ENCODE measurements at regions of chr4 and their contacts with region 1.

Region 1: DNA sequence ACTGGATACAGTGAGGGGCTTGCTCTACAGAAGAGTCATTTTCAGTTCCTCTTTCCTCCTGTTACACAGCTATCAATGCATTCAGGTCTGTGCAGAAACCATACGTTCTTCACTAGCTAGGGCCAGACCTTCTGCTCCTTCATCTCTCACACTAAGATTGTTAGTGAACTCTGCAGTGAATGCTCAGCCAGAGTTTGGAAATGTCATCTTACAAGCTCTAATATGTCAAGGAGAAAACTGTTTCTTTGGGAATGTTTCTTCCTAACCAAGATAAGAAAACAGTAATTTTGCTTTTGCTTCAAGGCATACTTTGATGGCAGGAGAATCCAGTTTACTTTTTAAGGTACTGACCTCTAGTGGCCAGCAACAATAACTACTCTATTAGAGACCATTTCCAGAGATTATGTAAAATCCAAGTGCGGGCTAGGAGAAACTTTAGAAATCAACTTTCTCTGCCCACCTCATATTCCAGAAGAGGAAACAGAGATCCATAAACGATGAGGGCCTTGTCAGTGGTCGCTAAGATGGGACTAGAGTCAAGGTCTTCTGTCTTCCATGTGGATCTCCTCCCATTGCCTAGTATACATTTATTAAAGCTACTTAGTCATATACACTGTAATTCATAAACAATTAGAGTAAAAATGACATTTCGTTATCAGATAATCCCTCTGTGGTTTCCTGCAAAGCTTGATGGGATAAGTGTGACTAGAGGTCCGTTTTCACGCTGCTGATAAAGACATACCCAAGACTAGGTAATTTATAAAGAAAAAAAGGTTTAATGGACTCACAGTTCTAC is 12.1 kb upstream of the CC2D2A start:
- DNase-seq: peak; percentile 49
- H3K4me3 ChIP-seq: no peak overlapping the region
- H3K27ac ChIP-seq: no peak overlapping the region
- H3K4me1 ChIP-seq: no peaks in the 10 kb centered on the region
- H3K27me3 ChIP-seq: peaks cover 3 to 18% of the 10 kb centered on the region in 2 experiments
- CTCF ChIP-seq: peak; percentile 50 to 54
- POLR2A ChIP-seq: no peak

Region 2: GRCh38 chr4:15106399-15106798 is 351.2 kb before region 1 on chr4:
- CTCF ChIA-PET with region 1: no interaction called
- POLR2A ChIA-PET with region 1: no interaction called
- dilution Hi-C with region 1: no loop called
- intact Hi-C with region 1: no loop called
- DNase-seq: no peak
- H3K4me3 ChIP-seq: no peak overlapping the region
- H3K27ac ChIP-seq: no peak overlapping the region
- H3K4me1 ChIP-seq: no peaks in the 10 kb centered on the region
- H3K27me3 ChIP-seq: no peaks in the 10 kb centered on the region
- CTCF ChIP-seq: no peak
- POLR2A ChIP-seq: no peak

Region 3: DNA sequence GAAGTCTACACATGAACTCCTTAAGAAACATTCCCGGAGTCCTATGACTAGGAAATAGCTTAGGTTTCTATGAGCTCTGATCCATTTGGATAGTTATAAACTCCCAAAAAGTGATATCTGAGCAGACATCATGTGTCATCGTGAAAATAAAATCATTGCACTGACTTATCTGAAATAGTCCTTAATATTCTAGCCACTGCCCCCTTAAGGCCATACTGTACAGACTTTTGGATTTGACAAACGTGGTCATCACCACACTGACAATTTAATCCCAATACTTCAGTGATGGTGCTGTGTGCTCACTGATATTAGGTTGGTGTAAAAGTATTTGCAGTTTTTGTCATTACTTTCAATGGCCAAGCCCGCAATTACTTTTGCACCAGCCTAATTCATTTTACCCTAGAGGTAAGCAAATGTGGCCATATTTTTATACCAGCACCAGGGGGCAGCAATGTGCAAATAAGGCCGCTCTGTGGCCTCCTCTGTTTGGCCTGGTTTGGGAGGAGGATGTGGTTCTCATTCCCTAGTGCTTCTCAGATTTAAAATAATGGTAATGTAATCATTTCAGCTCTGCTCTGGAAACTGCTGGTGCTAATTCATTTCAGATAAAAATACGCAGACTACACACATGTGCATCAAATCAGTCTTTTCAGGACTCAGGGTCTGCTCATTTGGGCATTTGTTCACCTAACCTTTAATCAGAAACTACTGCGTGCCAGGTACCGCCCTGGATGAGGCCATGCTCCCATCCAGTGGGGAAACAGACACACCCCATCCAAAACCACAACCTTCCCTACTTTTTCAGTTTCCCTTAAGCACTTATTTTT is 226.1 kb before region 1 on chr4:
- CTCF ChIA-PET with region 1: interaction called, 16 read pairs
- POLR2A ChIA-PET with region 1: no interaction called
- dilution Hi-C with region 1: no loop called
- intact Hi-C with region 1: loop called (anchors 1 kb)
- DNase-seq: peak; percentile 62
- H3K4me3 ChIP-seq: no peak overlapping the region
- H3K27ac ChIP-seq: no peak overlapping the region
- H3K4me1 ChIP-seq: no peaks in the 10 kb centered on the region
- H3K27me3 ChIP-seq: no peaks in the 10 kb centered on the region
- CTCF ChIP-seq: peak; percentile 60 to 61
- POLR2A ChIP-seq: no peak

Region 4: DNA sequence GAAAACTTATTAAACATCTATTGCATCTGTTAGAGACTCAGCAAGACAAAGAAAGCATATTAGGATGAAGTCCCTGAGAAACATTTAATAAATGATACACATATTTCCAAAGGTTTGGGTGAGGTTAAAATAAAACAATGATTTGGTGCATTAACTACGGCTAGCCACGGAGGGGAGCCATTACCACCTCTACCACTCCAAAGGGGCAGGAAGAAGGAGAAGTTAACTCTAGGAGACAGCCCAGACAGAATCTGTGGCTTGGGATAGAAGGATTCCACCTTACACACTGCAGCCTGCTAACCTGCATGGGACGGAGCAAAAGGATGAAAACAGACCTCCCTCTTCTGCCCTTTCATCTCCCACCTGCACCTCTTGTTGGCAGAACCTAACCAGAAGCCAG is 218.9 kb before region 1 on chr4:
- CTCF ChIA-PET with region 1: interaction called, 16 read pairs
- POLR2A ChIA-PET with region 1: no interaction called
- dilution Hi-C with region 1: no loop called
- intact Hi-C with region 1: loop called (anchors 1 kb)
- DNase-seq: peak; percentile 11
- H3K4me3 ChIP-seq: no peak overlapping the region
- H3K27ac ChIP-seq: no peak overlapping the region
- H3K4me1 ChIP-seq: no peaks in the 10 kb centered on the region
- H3K27me3 ChIP-seq: no peaks in the 10 kb centered on the region
- CTCF ChIP-seq: peak; percentile 22 to 26
- POLR2A ChIP-seq: no peak

Region 5: GRCh38 chr4:15469402-15470127 is 12.0 kb after region 1 on chr4 and contains the start of gene CC2D2A:
- CTCF ChIA-PET with region 1: interaction called, 26 read pairs
- POLR2A ChIA-PET with region 1: no interaction called
- dilution Hi-C with region 1: no loop called
- intact Hi-C with region 1: no loop called
- DNase-seq: peak; percentile 67
- H3K4me3 ChIP-seq: peak within 1 kb of the TSS; percentile 44 to 83 (median 51)
- H3K27ac ChIP-seq: no peak within 1 kb of the TSS
- H3K4me1 ChIP-seq: peaks cover 3% of the 10 kb centered on the region
- H3K27me3 ChIP-seq: peaks cover 2 to 10% of the 10 kb centered on the region in 2 experiments
- CTCF ChIP-seq: no peak
- POLR2A ChIP-seq: no peak
- total RNA-seq, gene CC2D2A: 13.2 and 22.4 TPM in 2 replicates

Region 6: DNA sequence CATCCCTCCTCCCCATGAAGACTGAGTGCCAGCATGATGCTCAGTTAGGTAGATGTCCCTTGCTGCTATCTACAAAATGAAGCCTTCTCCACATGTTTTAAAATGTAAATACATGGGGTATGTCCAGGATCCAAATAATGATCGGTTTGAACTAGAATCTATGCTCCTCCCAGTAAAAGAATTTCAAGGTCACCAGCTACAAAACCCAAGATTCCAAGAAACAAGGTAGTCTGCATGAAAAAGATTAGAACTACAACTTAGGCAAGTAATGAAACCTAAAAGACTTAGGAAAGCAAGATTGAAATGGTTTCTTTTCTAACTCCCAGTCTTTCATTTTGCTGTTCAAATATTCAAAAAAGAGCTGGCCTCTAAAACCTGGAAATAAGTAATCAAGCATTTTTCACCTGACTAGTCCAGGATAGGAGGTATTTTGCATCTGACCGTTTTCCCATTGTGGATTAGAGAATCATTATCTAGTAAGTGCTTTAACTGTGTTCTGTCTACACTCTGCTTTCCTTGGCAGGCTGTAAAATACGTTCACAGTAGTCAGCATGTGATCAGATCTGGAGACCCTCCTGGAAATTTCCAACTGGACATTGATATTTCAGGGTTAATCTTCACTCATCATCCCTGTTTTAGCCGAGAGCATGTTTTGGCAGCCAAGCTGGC is 69.5 kb after region 1 on chr4:
- CTCF ChIA-PET with region 1: no interaction called
- POLR2A ChIA-PET with region 1: no interaction called
- dilution Hi-C with region 1: no loop called
- intact Hi-C with region 1: no loop called
- DNase-seq: no peak
- H3K4me3 ChIP-seq: no peak overlapping the region
- H3K27ac ChIP-seq: no peak overlapping the region
- H3K4me1 ChIP-seq: no peaks in the 10 kb centered on the region
- H3K27me3 ChIP-seq: no peaks in the 10 kb centered on the region
- CTCF ChIP-seq: no peak
- POLR2A ChIP-seq: no peak

Measured in endothelial cell of umbilical vein (primary cell).